ENCODE measurements at regions of chr10 and their contacts with region 1.

Region 1: GRCh38 chr10:4725917-4726606 is 99.9 kb upstream of the AKR1E2 start:
- DNase-seq: no peak
- H3K4me3 Mint-ChIP-seq: peak overlapping the region; percentile 53
- H3K27ac Mint-ChIP-seq: peak overlapping the region; percentile 95
- H3K4me1 Mint-ChIP-seq: peaks cover 34% of the 10 kb centered on the region
- H3K27me3 Mint-ChIP-seq: no peaks in the 10 kb centered on the region
- CTCF ChIP-seq: no peak

Region 2: DNA sequence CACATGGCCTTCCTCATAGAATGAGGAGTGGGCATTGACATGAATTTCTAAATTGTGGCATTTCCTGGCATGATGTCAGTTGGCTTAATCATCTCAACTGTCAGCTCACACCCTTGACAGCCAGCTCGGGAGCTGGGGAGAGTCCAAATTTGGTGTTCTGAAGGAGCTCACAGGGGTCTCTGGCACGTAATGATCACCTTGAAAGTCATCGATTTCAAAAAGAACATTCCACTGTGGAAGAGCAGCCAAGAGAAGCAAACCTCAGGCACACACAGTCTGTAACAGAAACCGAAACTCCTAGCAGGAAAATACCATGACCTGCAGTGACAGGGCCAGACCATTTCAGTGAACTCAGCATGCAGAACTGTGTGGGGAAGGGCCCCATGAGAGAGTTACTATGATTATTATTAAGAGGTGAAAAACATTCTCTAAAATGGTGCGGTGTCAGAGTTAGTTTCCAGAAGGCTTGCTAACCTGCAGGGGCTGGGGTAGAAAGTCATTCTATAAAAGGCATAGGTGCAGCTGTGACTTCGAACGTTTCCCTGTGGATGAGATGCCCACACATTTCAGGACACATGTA is 914.7 kb before region 1 on chr10:
- CTCF ChIA-PET with region 1: no interaction called
- intact Hi-C with region 1: loop called (anchors 5 kb)
- DNase-seq: peak; percentile 55
- H3K4me3 Mint-ChIP-seq: peak overlapping the region; percentile 43
- H3K27ac Mint-ChIP-seq: peak overlapping the region; percentile 85
- H3K4me1 Mint-ChIP-seq: peaks cover 74% of the 10 kb centered on the region
- H3K27me3 Mint-ChIP-seq: no peaks in the 10 kb centered on the region
- CTCF ChIP-seq: no peak

Region 3: GRCh38 chr10:4663162-4663904 is 62.7 kb before region 1 on chr10:
- CTCF ChIA-PET with region 1: no interaction called
- intact Hi-C with region 1: loop called (anchors 2 kb)
- DNase-seq: peak; percentile 84
- H3K4me3 Mint-ChIP-seq: peak overlapping the region; percentile 25
- H3K27ac Mint-ChIP-seq: peak overlapping the region; percentile 98
- H3K4me1 Mint-ChIP-seq: peaks cover 30% of the 10 kb centered on the region
- H3K27me3 Mint-ChIP-seq: no peaks in the 10 kb centered on the region
- CTCF ChIP-seq: no peak

Region 4: GRCh38 chr10:4670737-4671136 is 55.3 kb before region 1 on chr10:
- CTCF ChIA-PET with region 1: interaction called, 4 read pairs
- intact Hi-C with region 1: loop called (anchors 2 kb)
- DNase-seq: no peak
- H3K4me3 Mint-ChIP-seq: peak overlapping the region; percentile 75
- H3K27ac Mint-ChIP-seq: peak overlapping the region; percentile 96
- H3K4me1 Mint-ChIP-seq: peaks cover 51% of the 10 kb centered on the region
- H3K27me3 Mint-ChIP-seq: no peaks in the 10 kb centered on the region
- CTCF ChIP-seq: no peak

Region 5: GRCh38 chr10:4678023-4678950 is 47.8 kb before region 1 on chr10:
- CTCF ChIA-PET with region 1: interaction called, 11 read pairs
- intact Hi-C with region 1: loop called (anchors 2 kb)
- DNase-seq: no peak
- H3K4me3 Mint-ChIP-seq: peak overlapping the region; percentile 48
- H3K27ac Mint-ChIP-seq: peak overlapping the region; percentile 96
- H3K4me1 Mint-ChIP-seq: peaks cover 59% of the 10 kb centered on the region
- H3K27me3 Mint-ChIP-seq: no peaks in the 10 kb centered on the region
- CTCF ChIP-seq: no peak

Measured in Calu3 (cell line).